Pancreas (tissue), 10 donors: ENCODE measurements at regions of chr3 and their contacts with region 1.

Region 1: GRCh38 chr3:187679638-187680396 is 9.6 kb upstream of the SST start:
- DNase-seq: peak; percentile 71 to 89 (median 86)
- ATAC-seq: peak; percentile 96 to 100 (median 99)
- H3K4me3 ChIP-seq: no peak overlapping the region
- H3K27ac ChIP-seq: no peak overlapping the region
- H3K4me1 ChIP-seq: peaks cover 0 to 4% (median 0%) of the 10 kb centered on the region in 3 donors
- H3K27me3 ChIP-seq: peaks cover 0 to 3% (median 0%) of the 10 kb centered on the region in 4 donors
- CTCF ChIP-seq: peak; percentile 84 to 94 (median 88)

Region 2: GRCh38 chr3:187227658-187228258 is 452.1 kb before region 1 on chr3:
- intact Hi-C with region 1: loop called in 2 of 3 experiments (anchors 5 to 10 kb)
- DNase-seq: no peak
- ATAC-seq: no peak
- H3K4me3 ChIP-seq: no peak overlapping the region
- H3K27ac ChIP-seq: no peak overlapping the region
- H3K4me1 ChIP-seq: no peaks in the 10 kb centered on the region
- H3K27me3 ChIP-seq: no peaks in the 10 kb centered on the region
- CTCF ChIP-seq: no peak

Region 3: DNA sequence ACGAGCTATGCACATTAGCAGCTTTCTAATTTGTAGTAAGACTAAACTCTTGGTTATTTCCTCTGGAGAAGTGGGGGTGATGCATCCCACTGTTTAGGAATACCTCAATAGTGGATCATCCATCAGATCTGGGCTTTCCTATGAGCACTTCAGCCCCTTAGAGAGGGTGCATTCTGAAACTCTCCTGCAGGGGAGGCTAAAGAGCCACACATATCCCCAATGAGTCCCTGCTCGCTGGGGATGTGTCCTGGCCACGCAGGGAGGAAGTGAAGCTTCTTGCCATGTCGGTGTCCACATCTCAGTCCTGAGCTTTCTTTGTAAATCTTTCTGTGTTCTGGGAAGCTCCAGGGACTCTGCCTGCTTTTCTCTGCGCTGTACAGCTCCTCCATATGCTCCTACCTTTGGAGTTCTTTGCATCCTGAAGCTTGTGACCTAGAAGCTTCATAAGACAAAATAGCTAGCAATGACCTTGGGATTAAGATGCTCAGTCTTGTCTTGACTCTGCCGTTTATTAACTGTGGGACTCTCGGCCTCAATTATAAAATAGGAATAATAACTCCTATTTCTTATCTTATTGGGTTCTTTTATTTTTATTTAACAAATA is 360.0 kb before region 1 on chr3:
- intact Hi-C with region 1: loop called in 2 of 3 experiments (anchors 2 to 5 kb)
- DNase-seq: peak in 5 of 6 donors; percentile 24 to 62 (median 41)
- ATAC-seq: peak; percentile 74 to 95 (median 92)
- H3K4me3 ChIP-seq: no peak overlapping the region
- H3K27ac ChIP-seq: no peak overlapping the region
- H3K4me1 ChIP-seq: peaks cover 0 to 5% (median 0%) of the 10 kb centered on the region in 3 donors
- H3K27me3 ChIP-seq: no peaks in the 10 kb centered on the region
- CTCF ChIP-seq: peak; percentile 59 to 76 (median 62)

Region 4: DNA sequence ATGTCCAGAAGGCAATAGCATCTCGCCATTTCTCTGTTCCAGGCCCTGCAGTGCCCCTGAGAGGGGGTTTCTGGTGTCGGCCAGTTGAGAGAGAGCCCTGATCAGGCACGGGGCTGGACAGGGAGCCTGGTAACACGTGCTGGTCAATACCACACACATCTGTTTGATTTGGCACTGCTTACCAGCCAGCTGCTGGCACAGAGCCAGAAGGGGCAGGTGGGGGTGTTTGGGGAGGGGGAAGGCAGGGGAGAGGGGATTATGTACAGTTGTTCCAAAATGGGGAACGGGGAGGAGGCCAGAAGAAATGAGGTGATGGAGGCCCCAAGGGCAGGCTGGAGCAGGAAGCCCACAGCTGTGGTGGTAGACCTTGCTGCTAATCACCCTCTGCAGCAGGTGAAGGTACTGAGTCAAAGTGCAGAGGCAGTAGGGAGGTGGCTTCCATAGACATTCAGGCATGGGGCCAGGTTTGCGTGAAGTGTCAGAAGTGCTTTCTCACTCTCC is 320.6 kb after region 1 on chr3:
- intact Hi-C with region 1: no loop called
- DNase-seq: peak in 5 of 6 donors; percentile 38 to 86 (median 68)
- ATAC-seq: peak; percentile 17 to 63 (median 38)
- H3K4me3 ChIP-seq: no peak overlapping the region
- H3K27ac ChIP-seq: no peak overlapping the region
- H3K4me1 ChIP-seq: peaks cover 27 to 28% (median 28%) of the 10 kb centered on the region in 3 donors
- H3K27me3 ChIP-seq: no peaks in the 10 kb centered on the region
- CTCF ChIP-seq: no peak